Left colon (tissue), 2 donors: ENCODE measurements at regions of chr6 and their contacts with region 1.

Region 1: DNA sequence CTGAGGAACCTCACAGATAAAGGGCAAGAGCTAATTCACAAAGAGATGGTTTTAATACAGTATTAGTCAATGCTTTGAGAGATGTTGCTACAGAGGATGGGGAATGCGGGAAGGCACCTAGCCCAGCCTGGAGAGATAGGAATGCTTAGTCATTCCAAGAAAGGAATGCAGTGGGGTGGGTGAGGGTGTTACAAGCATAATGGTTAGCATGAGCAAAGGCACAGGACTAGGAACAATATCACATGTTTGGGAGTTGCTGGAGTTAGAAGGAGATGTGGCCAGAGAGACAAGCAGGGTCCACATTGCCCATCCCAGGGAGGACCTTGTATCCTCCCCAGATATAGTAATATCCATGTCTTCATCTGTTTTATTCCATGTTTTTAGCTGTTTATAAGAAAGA is 107.0 kb upstream of the OGFRL1 start:
- DNase-seq: no peak
- ATAC-seq: no peak

Region 2: GRCh38 chr6:71349395-71349794 is 167.8 kb after region 1 on chr6:
- intact Hi-C with region 1: loop called in 1 of 2 experiments (anchors 10 kb)
- DNase-seq: no peak
- ATAC-seq: no peak

Region 3: GRCh38 chr6:71602385-71603007 is 420.9 kb after region 1 on chr6:
- intact Hi-C with region 1: no loop called
- DNase-seq: no peak
- ATAC-seq: no peak